Activated CD8-positive, alpha-beta memory T cell treated with anti-CD3 and anti-CD28 coated beads, Interleukin-2, amount 10 ng/mL, durations not matched to agents 7 days and 5 days (primary cell): ENCODE measurements at regions of chr6 and their contacts with region 1.

Region 1: DNA sequence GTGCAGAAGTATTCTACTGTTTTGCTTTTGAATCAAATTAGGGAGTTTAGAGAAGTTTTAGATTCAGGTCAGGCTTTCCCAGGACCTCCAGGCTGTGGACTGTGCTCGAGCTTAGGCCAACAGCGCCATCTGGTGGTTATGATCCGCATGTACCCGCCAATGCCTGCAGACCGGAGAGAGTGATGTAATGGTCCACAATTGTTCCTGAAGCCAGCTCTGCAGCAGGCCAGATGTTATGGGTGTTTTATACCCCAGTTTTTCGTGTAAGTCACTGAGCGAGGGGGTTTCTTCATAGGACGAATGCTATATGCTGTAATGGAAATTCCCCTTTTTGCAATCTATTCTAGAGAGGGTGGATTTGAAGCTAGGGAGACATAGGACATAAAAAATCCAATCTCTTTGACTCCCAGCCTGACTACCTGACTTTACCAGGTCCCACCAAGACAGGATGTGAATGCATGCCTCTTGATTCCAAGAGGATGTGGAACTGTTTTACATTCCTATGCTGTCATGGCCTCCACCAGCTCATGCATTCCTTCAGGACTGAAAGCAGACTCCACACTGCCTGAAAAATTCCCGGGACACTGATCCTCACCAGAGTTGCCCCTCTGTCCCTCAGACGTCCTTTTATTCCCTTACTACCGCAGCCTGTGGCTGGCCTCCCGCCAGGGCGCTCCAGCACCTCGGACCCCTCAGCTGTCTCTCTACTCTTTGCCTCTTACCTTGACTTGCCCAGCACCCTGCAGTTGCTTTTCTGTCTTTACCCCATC is 41.2 kb upstream of the LY86 start:
- DNase-seq: peak; percentile 88
- ATAC-seq: peak; percentile 97
- H3K4me3 Mint-ChIP-seq: peak overlapping the region; percentile 34
- H3K27ac Mint-ChIP-seq: no peak overlapping the region
- H3K4me1 Mint-ChIP-seq: peaks cover 12% of the 10 kb centered on the region
- H3K27me3 Mint-ChIP-seq: peaks cover 79% of the 10 kb centered on the region

Region 2: GRCh38 chr6:6057424-6058053 is 489.8 kb before region 1 on chr6:
- CTCF ChIA-PET with region 1: interaction called, 22 read pairs
- DNase-seq: no peak
- ATAC-seq: no peak
- H3K4me3 Mint-ChIP-seq: no peak overlapping the region
- H3K27ac Mint-ChIP-seq: no peak overlapping the region
- H3K4me1 Mint-ChIP-seq: no peaks in the 10 kb centered on the region
- H3K27me3 Mint-ChIP-seq: peaks cover 31% of the 10 kb centered on the region

Region 3: GRCh38 chr6:6293317-6293716 is 254.0 kb before region 1 on chr6:
- CTCF ChIA-PET with region 1: no interaction called
- DNase-seq: no peak
- ATAC-seq: no peak
- H3K4me3 Mint-ChIP-seq: no peak overlapping the region
- H3K27ac Mint-ChIP-seq: no peak overlapping the region
- H3K4me1 Mint-ChIP-seq: no peaks in the 10 kb centered on the region
- H3K27me3 Mint-ChIP-seq: peaks cover 13% of the 10 kb centered on the region

Region 4: GRCh38 chr6:6494677-6495076 is 52.6 kb before region 1 on chr6:
- CTCF ChIA-PET with region 1: interaction called, 11 read pairs
- DNase-seq: peak; percentile 57
- ATAC-seq: peak; percentile 33
- H3K4me3 Mint-ChIP-seq: no peak overlapping the region
- H3K27ac Mint-ChIP-seq: no peak overlapping the region
- H3K4me1 Mint-ChIP-seq: peaks cover 8% of the 10 kb centered on the region
- H3K27me3 Mint-ChIP-seq: peaks cover 52% of the 10 kb centered on the region

Region 5: DNA sequence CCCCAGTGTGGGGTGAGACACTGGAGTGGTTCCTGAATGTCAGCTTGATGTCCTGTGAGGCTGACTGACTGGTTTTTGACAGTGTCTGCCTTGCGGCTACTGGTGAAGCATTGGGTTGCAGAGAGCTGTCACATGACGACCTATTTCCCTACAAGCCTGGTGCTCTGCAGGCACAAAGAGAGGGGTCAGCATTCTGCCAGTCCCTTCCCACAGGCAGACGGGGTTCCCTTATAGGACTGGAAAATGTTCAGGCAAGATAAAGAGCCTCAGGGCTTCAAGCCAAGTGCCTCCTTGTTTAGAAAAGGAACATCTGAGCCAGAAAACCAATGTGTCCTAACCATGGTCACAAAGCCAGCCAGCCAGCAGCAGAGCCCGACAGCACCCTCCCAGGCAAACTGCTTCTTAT is 52.2 kb after region 1 on chr6:
- CTCF ChIA-PET with region 1: no interaction called
- DNase-seq: no peak
- ATAC-seq: no peak
- H3K4me3 Mint-ChIP-seq: no peak overlapping the region
- H3K27ac Mint-ChIP-seq: no peak overlapping the region
- H3K4me1 Mint-ChIP-seq: peaks cover 9% of the 10 kb centered on the region
- H3K27me3 Mint-ChIP-seq: peaks cover 8% of the 10 kb centered on the region